Sigmoid colon (tissue), 7 donors: ENCODE measurements at regions of chr20 and their contacts with region 1.

Region 1: DNA sequence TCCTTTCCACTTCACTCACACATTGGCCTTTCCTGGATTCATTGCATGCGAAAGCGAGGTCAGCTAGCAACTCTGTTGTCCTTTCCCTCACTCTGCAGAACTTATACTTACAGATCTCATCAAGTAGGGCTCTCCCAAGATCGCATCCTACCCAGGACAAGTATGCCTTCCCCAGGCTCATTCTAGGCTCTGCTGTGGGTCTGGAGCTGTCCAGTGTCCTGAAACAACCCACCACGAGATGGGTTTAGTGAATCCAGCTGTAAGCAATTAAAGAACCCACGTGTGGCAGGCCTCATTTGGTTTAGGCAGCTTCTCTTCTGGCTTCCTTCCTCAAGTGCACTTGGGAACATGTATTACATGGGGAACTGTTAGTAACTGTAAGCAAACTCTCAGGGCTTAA is 406.5 kb upstream of the CHD6 start:
- DNase-seq: no peak
- H3K4me3 ChIP-seq: no peak overlapping the region
- H3K27ac ChIP-seq: no peak overlapping the region
- H3K4me1 ChIP-seq: no peaks in the 10 kb centered on the region
- H3K27me3 ChIP-seq: no peaks in the 10 kb centered on the region
- CTCF ChIP-seq: no peak
- EP300 ChIP-seq: no peak
- POLR2A ChIP-seq: no peak

Region 2: DNA sequence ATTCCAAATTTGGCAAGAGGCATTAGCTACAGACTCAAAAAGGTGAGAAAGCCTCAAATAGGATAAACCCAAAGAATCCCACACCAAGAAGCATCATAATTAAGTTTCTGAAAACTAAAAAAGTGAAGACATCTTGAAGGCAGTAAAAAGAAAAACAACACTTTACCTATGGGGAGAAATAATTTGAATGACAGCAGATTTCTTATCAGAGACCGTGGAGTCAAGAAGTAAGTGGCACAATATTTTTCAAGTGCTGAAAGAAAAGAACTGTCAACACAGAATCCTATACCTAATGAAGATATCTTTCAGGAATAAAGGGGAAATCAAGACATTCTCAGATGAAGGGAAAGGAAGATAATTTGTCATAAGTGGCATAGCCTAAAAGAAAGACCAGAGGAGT is 213.2 kb before region 1 on chr20:
- intact Hi-C with region 1: no loop called
- DNase-seq: no peak
- H3K4me3 ChIP-seq: no peak overlapping the region
- H3K27ac ChIP-seq: no peak overlapping the region
- H3K4me1 ChIP-seq: no peaks in the 10 kb centered on the region
- H3K27me3 ChIP-seq: no peaks in the 10 kb centered on the region
- CTCF ChIP-seq: no peak
- EP300 ChIP-seq: no peak
- POLR2A ChIP-seq: no peak

Region 3: DNA sequence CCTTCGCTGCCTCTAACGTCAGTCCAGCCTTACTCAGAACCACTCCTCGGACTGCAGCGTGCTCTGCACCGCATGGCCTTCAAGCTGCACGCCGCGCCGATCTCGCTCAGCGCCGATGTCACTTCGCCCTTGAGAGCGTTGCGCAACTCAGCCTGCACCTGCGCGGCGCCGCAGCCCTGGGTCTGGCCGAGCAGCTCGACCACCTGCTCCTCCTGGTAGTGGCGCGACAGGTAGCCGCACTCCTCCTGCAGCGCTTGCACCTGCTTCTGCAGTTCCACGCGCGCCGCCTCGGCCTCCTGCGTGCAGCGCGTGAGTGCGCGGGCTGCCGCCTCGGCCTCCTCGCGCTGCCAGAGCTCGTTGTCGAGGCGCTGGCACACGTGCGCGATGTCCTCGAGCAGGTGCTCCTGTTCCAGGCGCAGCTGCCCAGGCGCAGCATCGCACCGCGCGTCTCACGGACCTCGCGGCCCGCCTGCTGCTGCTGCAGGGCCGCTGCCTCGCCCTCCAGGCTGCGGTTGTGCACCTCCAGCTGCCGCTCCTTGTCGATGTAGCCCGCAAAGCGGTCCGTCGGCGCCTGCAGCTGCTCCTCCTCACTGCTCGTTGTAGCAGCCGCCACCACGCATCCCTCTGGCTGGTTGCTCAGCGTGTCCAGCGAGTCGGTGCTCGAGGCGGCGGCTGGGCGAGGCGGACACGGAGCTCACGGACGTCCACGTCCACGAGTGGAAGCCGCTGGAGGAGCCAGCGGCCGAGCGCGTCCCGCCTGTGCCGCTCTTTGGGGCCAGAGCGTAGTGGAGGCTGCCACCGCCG is 25.9 kb before region 1 on chr20:
- intact Hi-C with region 1: loop called (anchors 2 kb)
- DNase-seq: no peak
- H3K4me3 ChIP-seq: no peak overlapping the region
- H3K27ac ChIP-seq: no peak overlapping the region
- H3K4me1 ChIP-seq: no peaks in the 10 kb centered on the region
- H3K27me3 ChIP-seq: no peaks in the 10 kb centered on the region
- CTCF ChIP-seq: no peak
- EP300 ChIP-seq: no peak
- POLR2A ChIP-seq: no peak